Mammary epithelial cell (primary cell): ENCODE measurements at regions of chr9 and their contacts with region 1.

Region 1: DNA sequence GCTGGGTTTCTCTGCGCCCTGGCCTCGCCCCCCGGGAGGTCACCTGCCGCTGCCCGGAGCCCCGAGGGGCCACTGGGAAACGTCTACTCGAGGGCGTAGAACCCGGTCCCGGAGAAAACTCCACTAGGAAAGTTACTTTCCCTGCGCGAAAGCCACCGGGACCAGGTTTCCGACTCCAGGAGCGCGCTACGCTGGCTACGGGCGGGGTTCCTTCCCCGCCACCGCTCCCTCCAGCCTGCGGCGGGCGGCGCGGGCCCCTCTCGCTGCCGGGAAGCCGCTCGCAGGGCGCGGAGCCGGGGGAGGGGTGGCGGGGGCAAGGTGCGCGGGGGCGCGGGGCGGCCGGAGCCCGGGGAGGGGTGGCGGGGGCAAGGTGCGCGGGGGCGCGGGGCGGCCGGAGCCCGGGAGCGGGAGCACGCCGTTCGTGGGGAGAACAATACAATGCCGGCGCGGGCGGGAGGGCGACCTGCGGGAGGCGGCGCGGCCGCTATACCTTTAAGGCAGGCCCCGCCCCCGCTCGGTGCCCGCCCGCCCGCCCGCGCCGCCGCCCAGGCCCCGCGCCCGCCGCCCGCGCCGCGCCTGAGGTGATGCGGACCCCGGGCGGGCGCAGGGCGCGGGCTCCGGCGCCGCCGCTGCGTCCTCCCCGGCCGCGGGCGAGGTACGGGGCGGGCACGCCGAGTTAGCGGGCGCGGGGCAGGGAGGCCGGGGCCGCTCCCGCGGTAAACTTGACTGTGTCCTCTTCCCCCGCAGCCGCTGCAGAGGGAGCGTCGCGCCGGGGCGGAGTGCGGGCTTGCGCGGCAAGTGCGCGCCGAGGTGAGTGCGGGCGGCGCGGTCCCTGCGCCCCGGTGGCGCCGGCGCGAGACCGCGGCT is 278.1 kb downstream of the AOPEP start:
- DNase-seq: peak; percentile 34
- H3K4me3 ChIP-seq: peak overlapping the region; percentile 79 to 95 (median 87)
- H3K27ac ChIP-seq: peak overlapping the region; percentile 88
- H3K4me1 ChIP-seq: peaks cover 40% of the 10 kb centered on the region
- H3K27me3 ChIP-seq: no peaks in the 10 kb centered on the region
- CTCF ChIP-seq: no peak

Region 2: GRCh38 chr9:94668418-94668932 is 336.2 kb before region 1 on chr9:
- CTCF ChIA-PET with region 1: no interaction called
- dilution Hi-C with region 1: no loop called
- in situ Hi-C with region 1: no loop called
- intact Hi-C with region 1: loop called (anchors 5 kb)
- DNase-seq: no peak
- H3K4me3 ChIP-seq: no peak overlapping the region
- H3K27ac ChIP-seq: no peak overlapping the region
- H3K4me1 ChIP-seq: peaks cover 16% of the 10 kb centered on the region
- H3K27me3 ChIP-seq: no peaks in the 10 kb centered on the region
- CTCF ChIP-seq: no peak

Region 3: GRCh38 chr9:94805585-94805984 is 199.1 kb before region 1 on chr9:
- CTCF ChIA-PET with region 1: no interaction called
- dilution Hi-C with region 1: no loop called
- in situ Hi-C with region 1: no loop called
- intact Hi-C with region 1: loop called (anchors 1 kb)
- DNase-seq: peak; percentile 99
- H3K4me3 ChIP-seq: no peak overlapping the region
- H3K27ac ChIP-seq: peak overlapping the region; percentile 96
- H3K4me1 ChIP-seq: peaks cover 48% of the 10 kb centered on the region
- H3K27me3 ChIP-seq: no peaks in the 10 kb centered on the region
- CTCF ChIP-seq: no peak

Region 4: GRCh38 chr9:94922098-94922607 is 82.5 kb before region 1 on chr9:
- CTCF ChIA-PET with region 1: no interaction called
- dilution Hi-C with region 1: no loop called
- in situ Hi-C with region 1: no loop called
- intact Hi-C with region 1: loop called (anchors 2 kb)
- DNase-seq: peak; percentile 69
- H3K4me3 ChIP-seq: no peak overlapping the region
- H3K27ac ChIP-seq: peak overlapping the region; percentile 62
- H3K4me1 ChIP-seq: peaks cover 64% of the 10 kb centered on the region
- H3K27me3 ChIP-seq: no peaks in the 10 kb centered on the region
- CTCF ChIP-seq: no peak

Region 5: DNA sequence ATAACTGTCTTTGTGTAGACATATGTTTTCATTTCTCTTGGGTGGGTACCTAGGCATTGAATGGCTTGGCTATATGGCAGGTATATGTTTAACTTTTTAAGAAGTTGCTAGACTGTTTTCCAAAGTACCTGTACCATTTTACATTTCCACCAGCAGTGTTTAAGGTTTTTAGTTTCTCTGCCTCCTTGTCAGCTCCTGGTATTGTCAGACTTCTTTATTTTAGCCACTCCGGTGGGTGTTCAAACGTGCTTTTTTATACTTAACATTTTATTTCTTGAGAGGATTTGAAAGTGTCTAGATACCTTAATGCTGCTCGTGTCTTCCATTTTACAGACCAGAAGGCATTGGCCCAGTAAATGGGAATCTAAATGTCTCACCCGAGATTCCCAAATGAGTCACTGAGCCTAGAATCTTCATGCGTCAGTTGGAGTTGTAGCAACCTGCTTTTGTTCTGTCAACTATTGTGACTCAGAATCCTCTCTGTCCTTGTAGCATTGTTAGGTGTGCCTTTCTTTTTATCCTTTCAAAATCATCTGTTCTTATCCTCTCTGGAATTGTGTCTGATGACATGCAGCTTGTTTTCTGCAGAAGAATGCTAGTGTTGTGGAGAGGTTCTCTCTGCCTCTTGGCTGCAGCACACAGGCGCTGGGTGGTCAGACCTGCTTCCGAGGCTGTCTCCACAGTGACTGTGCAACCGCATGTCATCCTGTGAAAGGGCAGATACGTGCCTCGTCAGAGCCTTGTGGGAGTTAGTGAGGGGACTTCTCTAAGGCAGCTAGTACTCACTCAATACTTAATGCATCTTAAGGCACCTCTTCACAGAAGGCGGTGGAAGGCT is 13.7 kb after region 1 on chr9:
- CTCF ChIA-PET with region 1: interaction called, 4 read pairs
- dilution Hi-C with region 1: no loop called
- in situ Hi-C with region 1: no loop called
- intact Hi-C with region 1: loop called (anchors 1 kb)
- DNase-seq: peak; percentile 99
- H3K4me3 ChIP-seq: peak overlapping the region in 1 of 3 experiments; percentile 3
- H3K27ac ChIP-seq: peak overlapping the region; percentile 99
- H3K4me1 ChIP-seq: peaks cover 53% of the 10 kb centered on the region
- H3K27me3 ChIP-seq: no peaks in the 10 kb centered on the region
- CTCF ChIP-seq: no peak

Region 6: GRCh38 chr9:95103385-95103784 is 98.7 kb after region 1 on chr9:
- CTCF ChIA-PET with region 1: no interaction called
- dilution Hi-C with region 1: no loop called
- in situ Hi-C with region 1: no loop called
- intact Hi-C with region 1: loop called (anchors 5 kb)
- DNase-seq: no peak
- H3K4me3 ChIP-seq: no peak overlapping the region
- H3K27ac ChIP-seq: no peak overlapping the region
- H3K4me1 ChIP-seq: peaks cover 63% of the 10 kb centered on the region
- H3K27me3 ChIP-seq: no peaks in the 10 kb centered on the region
- CTCF ChIP-seq: peak in 1 of 2 donors; percentile 2

Region 7: GRCh38 chr9:95250462-95251221 is 246.0 kb after region 1 on chr9:
- CTCF ChIA-PET with region 1: no interaction called
- dilution Hi-C with region 1: no loop called
- in situ Hi-C with region 1: no loop called
- intact Hi-C with region 1: no loop called
- DNase-seq: no peak
- H3K4me3 ChIP-seq: no peak overlapping the region
- H3K27ac ChIP-seq: no peak overlapping the region
- H3K4me1 ChIP-seq: peaks cover 5% of the 10 kb centered on the region
- H3K27me3 ChIP-seq: no peaks in the 10 kb centered on the region
- CTCF ChIP-seq: no peak

Region 8: DNA sequence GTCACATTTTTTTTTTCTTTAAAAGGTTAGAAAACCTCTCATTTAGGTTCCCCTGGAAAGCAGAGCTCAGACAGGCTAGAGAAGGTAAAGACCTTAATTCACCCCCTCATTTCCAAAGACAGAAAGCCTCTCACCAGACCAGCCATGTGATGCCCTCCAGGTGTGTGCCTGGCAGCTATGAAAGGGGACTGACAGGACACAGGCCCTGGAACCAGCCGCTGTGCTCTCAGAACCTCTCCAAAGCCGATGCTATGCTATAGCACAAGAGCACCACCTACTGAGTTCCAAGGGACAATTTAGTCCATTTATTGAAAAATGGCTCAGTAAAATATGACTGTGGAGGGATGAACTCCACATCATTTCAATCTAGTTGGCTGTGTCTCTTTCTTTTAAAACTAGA is 264.0 kb after region 1 on chr9:
- CTCF ChIA-PET with region 1: no interaction called
- dilution Hi-C with region 1: no loop called
- in situ Hi-C with region 1: no loop called
- intact Hi-C with region 1: loop called (anchors 5 kb)
- DNase-seq: peak; percentile 26
- H3K4me3 ChIP-seq: no peak overlapping the region
- H3K27ac ChIP-seq: no peak overlapping the region
- H3K4me1 ChIP-seq: no peaks in the 10 kb centered on the region
- H3K27me3 ChIP-seq: no peaks in the 10 kb centered on the region
- CTCF ChIP-seq: peak in 1 of 2 donors; percentile 52